Activated CD4-positive, alpha-beta T cell treated with anti-CD3 and anti-CD28 coated beads, Interleukin-2, amount 10 ng/mL, durations not matched to agents 24 days and 14 days (primary cell): ENCODE measurements at regions of chrX and their contacts with region 1.

Region 1: GRCh38 chrX:120457766-120458180 is 11.3 kb downstream of the LAMP2 start:
- DNase-seq: peak; percentile 64
- H3K4me3 Mint-ChIP-seq: peak overlapping the region; percentile 70
- H3K27ac Mint-ChIP-seq: peak overlapping the region; percentile 62
- H3K4me1 Mint-ChIP-seq: peaks cover 30% of the 10 kb centered on the region
- H3K27me3 Mint-ChIP-seq: no peaks in the 10 kb centered on the region

Region 2: GRCh38 chrX:120308959-120309872 is 148.6 kb before region 1 on chrX:
- intact Hi-C with region 1: loop called (anchors 5 kb)
- DNase-seq: peak; percentile 89
- H3K4me3 Mint-ChIP-seq: peak overlapping the region; percentile 74
- H3K27ac Mint-ChIP-seq: peak overlapping the region; percentile 13
- H3K4me1 Mint-ChIP-seq: peaks cover 18% of the 10 kb centered on the region
- H3K27me3 Mint-ChIP-seq: peaks cover 59% of the 10 kb centered on the region

Region 3: GRCh38 chrX:120365320-120365719 is 92.5 kb before region 1 on chrX:
- intact Hi-C with region 1: loop called (anchors 10 kb)
- DNase-seq: peak; percentile 81
- H3K4me3 Mint-ChIP-seq: no peak overlapping the region
- H3K27ac Mint-ChIP-seq: no peak overlapping the region
- H3K4me1 Mint-ChIP-seq: no peaks in the 10 kb centered on the region
- H3K27me3 Mint-ChIP-seq: peaks cover 3% of the 10 kb centered on the region

Region 4: DNA sequence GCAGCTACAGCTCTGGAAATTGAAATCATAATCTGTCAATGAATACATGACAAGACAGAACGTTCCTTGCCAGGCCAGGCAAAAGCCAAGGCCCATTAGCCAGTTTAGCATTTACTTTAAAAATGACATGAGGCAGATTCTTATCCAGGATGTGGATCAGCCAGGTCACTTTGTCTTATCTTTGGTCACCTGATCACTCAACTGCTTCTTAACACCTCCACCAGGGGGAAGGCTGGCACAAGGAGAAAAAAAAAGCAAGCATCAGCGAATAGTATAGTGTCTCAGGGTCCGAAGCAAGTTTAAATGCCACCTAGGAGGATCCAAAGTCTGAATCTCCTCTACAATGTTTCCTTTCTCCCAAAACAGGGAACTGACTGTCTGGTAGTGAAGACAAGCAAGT is 77.1 kb before region 1 on chrX:
- intact Hi-C with region 1: loop called (anchors 5 kb)
- DNase-seq: peak; percentile 74
- H3K4me3 Mint-ChIP-seq: no peak overlapping the region
- H3K27ac Mint-ChIP-seq: no peak overlapping the region
- H3K4me1 Mint-ChIP-seq: no peaks in the 10 kb centered on the region
- H3K27me3 Mint-ChIP-seq: peaks cover 8% of the 10 kb centered on the region